Sciatic nerve (tissue), 2 donors: ENCODE measurements at regions of chr13 and their contacts with region 1.

Region 1: DNA sequence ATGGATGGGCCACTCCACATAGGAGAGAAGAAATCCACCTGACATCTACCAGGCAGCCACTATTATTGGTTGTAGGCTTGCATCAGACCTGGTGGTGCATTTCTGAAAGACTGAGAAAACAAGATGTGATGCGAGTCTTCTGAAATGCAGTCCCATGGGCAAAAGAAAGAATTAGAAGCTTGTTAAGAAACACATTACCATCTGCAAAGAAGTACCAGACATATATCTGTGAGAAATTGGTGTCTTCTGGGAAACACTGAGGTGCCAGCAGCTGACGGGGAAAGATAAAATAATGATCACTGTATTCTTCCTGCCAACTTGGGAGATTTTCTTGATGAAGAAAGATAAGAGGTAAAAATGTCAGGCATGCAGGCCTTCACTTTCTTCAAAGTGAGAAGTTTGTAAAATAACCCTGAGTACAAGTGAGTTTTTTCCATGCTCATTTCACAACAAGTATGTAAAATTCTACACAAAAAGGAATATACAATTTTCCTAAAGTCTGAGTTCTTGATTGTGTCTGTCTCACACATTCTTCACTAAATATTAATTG is 14.3 kb downstream of the AMER2 start:
- DNase-seq: no peak
- ATAC-seq: no peak

Region 2: GRCh38 chr13:25037057-25037813 is 120.5 kb before region 1 on chr13:
- intact Hi-C with region 1: no loop called
- DNase-seq: no peak
- ATAC-seq: peak; percentile 65

Region 3: DNA sequence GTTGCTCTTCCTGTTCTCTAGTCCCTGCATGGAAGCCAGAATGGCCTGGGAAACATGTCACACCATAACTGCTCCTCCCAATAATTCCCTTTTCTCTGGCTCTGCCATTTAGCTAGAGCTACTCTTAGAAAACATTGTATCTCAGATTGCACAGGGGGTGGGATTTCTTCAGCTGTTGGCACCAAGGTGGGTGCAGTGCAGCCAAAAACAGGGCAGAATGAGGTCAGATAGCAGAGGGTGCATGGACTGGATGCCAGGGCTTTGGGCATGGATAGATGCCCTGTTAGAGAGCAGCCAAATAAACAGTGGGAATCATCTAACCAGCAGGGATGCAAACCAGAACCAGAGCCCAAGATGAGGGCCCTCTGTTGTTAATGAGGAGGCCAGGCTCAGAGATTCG is 19.3 kb after region 1 on chr13:
- intact Hi-C with region 1: loop called (anchors 2 kb)
- DNase-seq: no peak
- ATAC-seq: no peak